ENCODE measurements at regions of chr7 and their contacts with region 1.

Region 1: DNA sequence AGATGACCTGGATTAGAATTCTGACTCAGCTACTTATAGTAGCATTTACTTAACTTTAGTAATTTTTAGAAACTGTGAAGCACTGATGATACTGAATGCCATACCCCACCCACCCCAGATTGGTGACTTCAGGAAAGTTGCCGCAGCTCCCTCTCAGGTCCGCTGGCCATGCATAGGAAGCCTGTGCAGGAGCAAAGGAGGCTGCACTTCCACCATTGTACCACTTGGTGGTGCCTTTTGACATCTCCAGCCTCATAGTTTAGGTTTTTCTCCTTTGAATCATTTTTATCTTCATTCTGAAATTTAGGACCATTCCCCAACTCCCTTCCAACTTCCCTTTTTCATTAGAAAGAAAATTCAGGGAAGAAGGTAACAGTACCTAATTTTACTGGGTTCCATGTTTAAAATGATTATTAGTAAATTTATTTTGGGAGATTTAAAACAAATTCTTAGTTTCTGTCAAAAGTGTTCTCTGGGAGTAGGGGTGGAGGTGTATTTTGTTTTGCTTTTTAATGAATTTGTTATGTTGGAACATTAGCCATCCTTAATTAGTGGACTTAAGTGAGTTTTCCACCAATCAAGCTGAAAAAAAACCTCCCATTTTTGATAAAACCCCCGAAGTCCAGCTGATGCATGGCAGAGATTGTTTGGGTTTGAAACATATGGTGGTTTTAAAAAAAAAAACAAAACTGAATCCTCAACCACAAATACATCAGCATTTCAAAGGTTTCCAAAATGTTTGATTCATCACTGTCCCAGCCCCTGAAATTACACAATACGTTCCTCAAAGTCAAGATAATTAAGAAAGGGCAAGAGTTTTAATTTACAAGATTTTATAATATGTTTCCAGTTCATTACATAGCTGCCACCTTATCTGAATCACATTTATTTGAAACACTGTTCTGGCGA is 109.6 kb downstream of the WNT2 start:
- DNase-seq: peak; percentile 47
- CTCF ChIP-seq: peak; percentile 74

Region 2: DNA sequence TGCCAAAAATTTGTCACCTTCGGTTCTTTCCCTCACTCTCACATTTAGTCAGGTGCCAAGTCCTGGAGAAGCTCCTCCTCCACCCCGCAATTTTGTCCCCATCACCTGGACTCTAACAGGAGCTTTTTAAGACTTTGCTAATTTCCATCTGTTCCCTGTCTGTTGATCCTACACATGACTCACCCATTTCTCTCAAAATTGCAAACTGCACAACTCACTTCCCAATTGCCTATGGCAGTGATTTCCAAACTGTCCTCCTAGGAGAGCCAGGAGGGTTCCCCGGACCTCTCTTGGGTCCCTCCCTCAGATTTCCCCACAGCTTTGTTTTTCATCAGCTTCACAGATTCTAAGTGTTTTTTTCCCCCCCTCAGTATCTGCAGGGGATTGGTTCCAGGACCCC is 10.7 kb before region 1 on chr7:
- CTCF ChIA-PET with region 1: interaction called, 31 read pairs
- POLR2A ChIA-PET with region 1: no interaction called
- DNase-seq: no peak
- CTCF ChIP-seq: no peak

Region 3: GRCh38 chr7:117227091-117227490 is 13.9 kb after region 1 on chr7:
- CTCF ChIA-PET with region 1: interaction called, 23 read pairs
- POLR2A ChIA-PET with region 1: no interaction called
- DNase-seq: no peak
- CTCF ChIP-seq: no peak

Region 4: GRCh38 chr7:117364339-117365080 is 151.3 kb after region 1 on chr7:
- CTCF ChIA-PET with region 1: interaction called, 12 read pairs
- POLR2A ChIA-PET with region 1: no interaction called
- DNase-seq: no peak
- CTCF ChIP-seq: no peak

Region 5: DNA sequence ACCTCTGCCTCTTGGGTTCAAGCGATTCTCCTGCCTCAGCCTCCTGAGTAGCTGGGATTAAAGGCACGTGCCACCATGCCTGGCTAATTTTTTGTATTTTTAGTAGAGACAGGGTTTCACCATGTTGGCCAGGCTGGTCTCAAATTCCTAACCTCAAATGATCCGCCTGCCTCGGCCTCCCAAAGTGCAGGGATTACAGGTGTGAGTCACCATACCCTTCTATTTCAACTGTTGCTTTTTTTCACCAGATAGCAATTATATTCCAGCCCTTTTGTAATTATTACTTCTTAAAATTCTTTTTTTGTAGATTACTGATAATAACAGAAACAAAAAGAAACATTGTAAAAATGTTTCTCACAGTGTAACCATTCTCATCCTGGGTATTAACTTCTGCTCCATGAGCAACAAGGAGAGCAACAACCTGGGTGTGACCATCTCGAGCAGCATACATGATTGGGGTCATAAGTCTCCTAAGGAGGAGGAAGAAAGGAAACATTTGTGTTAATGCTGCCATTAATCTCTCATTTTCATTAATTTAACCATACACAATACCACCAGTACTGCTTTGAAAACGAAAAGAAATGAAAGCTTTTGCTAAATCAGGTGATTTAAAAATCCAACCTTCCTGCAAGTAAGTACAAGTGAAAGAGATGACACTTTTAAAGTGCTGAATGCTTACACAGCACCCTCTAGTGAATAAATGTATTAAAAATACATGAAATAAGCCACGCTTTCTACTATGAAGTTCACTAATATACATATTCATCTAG is 172.3 kb after region 1 on chr7:
- CTCF ChIA-PET with region 1: interaction called, 36 read pairs
- POLR2A ChIA-PET with region 1: no interaction called
- DNase-seq: peak; percentile 13
- CTCF ChIP-seq: peak; percentile 20